ENCODE measurements at regions of chr20 and their contacts with region 1.

Region 1: GRCh38 chr20:46293084-46293483 is 15.2 kb downstream of the CDH22 start:
- DNase-seq: no peak
- H3K4me3 ChIP-seq: no peak overlapping the region
- H3K27ac ChIP-seq: no peak overlapping the region
- H3K4me1 ChIP-seq: no peaks in the 10 kb centered on the region
- H3K27me3 ChIP-seq: no peaks in the 10 kb centered on the region
- CTCF ChIP-seq: no peak

Region 2: DNA sequence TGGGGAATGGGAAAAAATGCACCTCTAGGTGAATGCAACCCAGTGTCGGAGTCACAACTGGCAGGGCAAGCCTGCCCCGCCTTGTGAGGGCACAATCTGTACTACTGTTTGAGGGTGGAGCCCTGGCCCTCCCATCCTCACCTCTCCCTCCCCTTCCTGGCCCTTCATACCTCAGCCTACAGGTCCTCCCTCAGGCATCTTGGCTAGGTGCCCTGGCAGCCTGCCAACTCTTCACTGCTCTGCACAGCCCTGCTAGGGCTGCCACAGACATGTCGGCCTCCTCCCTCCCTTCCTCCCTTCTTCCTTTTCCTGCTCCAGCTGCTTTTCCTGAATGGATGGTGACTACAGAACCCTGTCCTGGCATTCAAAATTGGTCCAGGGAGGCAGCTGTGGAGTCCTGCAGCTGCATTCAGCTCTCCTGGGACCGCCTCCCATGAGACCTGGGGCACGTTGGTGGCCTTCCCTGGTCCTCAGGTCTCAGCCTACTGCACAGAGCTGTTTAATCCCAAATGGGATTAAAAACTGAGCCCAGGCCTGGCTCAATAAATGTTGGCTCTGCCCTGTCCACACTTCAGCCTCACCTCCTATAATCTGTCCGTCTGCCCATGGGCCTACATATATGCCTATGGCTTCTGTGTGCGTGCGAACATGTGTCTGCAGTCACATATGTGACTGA is 37.5 kb before region 1 on chr20:
- intact Hi-C with region 1: no loop called
- DNase-seq: no peak
- H3K4me3 ChIP-seq: no peak overlapping the region
- H3K27ac ChIP-seq: no peak overlapping the region
- H3K4me1 ChIP-seq: no peaks in the 10 kb centered on the region
- H3K27me3 ChIP-seq: peaks cover 7% of the 10 kb centered on the region
- CTCF ChIP-seq: no peak

Region 3: GRCh38 chr20:46343348-46343974 is 50.4 kb after region 1 on chr20:
- intact Hi-C with region 1: loop called (anchors 5 kb)
- DNase-seq: no peak
- H3K4me3 ChIP-seq: no peak overlapping the region
- H3K27ac ChIP-seq: no peak overlapping the region
- H3K4me1 ChIP-seq: peaks cover 0 to 5% of the 10 kb centered on the region in 2 donors
- H3K27me3 ChIP-seq: peaks cover 3% of the 10 kb centered on the region
- CTCF ChIP-seq: no peak

Measured in ascending aorta (tissue), 2 donors.